Esophagus squamous epithelium (tissue), 5 donors: ENCODE measurements at regions of chr7 and their contacts with region 1.

Region 1: GRCh38 chr7:945556-946255 is 8.8 kb downstream of the ADAP1 start:
- DNase-seq: no peak
- H3K4me3 ChIP-seq: peak overlapping the region; percentile 2 to 49 (median 30)
- H3K27ac ChIP-seq: peak overlapping the region; percentile 77 to 89 (median 84)
- H3K4me1 ChIP-seq: peaks cover 14 to 30% (median 14%) of the 10 kb centered on the region in 3 donors
- H3K27me3 ChIP-seq: no peaks in the 10 kb centered on the region
- CTCF ChIP-seq: no peak
- POLR2A ChIP-seq: peak in 3 of 4 donors; percentile 39 to 47 (median 47)

Region 2: DNA sequence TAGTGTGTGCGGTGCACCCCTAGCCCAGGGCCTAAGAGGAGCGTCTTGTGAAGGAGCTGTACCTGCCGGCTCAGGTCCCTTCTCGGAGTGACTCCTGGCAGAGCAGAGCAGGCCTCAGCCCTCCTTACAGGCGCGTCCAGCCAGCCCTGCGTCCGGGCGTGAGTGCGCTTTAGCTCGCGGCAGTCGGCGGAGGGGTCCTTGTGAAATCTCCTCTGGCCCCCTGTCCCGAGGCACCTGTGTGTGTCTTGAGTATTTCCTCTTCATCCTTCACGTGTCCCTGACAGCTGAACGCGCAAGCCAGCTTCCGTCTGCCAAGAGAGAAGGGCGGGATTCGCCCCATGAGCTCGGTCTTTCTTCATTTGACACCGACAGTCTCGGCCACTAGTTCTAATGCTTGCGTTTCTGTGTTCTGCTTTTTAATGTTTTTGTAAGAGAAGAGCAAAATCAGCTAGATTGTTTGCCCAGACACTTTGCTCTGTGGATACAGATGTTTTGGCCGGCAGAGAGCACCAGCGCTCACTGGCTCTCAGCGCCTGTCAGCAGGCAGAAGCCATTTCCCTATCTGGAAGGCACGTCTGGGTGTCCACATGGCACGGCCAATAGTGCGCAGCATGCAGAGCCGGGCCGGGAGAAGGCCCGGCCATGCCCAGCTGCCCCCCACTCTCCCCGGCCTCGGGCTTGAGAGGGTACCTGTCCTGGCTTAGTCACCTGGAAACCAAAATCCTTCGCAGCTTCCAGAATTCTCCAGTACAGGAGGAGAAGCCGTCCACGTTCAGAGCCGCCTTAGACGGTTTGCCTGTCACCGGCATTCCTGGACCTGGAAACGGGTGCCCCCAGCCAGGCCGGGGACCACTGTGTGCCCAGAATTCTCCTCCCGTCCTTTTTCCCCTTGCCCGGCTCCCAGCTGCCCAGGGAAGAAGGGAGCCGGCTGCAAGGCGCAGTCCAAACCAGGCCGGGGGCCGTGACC is 62.4 kb before region 1 on chr7:
- intact Hi-C with region 1: no loop called
- DNase-seq: no peak
- H3K4me3 ChIP-seq: no peak overlapping the region
- H3K27ac ChIP-seq: peak overlapping the region in 2 of 4 donors; percentile 9 to 19
- H3K4me1 ChIP-seq: peaks cover 28 to 82% (median 48%) of the 10 kb centered on the region in 3 donors
- H3K27me3 ChIP-seq: no peaks in the 10 kb centered on the region
- CTCF ChIP-seq: no peak
- POLR2A ChIP-seq: no peak

Region 3: DNA sequence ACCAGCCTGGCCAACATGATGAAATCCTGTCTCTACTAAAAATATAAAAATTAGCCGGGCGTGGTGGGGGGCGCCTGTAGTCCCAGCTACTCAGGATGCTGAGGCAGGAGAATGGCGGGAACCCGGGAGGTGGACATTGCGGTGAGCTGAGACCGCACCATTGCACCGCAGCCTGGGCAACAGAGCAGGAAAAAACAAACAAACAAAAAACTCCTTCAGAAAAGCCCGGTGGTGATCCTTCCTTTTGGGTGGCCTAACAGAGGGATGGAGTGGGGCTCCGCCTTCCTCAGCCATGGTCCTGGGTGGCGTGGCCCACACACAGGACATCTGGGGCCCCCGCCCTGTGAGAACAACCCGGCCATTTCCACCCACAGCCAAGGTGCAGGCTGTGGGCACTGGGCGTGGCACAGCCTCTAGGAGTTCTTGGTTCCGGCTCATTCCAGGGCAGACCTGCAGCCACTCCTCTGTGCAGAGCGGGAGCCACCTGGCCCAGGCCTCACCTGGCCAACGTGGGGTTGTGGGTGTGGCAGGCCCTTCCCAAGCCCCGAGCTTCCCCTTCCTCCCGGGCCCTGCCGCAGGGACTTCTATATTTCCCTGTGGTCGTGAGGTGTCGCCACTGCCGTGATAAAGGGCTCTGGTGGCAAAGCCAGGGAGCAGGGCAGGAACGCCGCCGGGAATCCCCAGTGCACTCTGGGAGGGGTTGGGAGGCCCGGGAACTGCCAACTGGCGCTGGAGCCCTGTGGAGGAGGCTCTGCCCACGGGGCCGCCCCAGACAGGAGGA is 31.8 kb before region 1 on chr7:
- intact Hi-C with region 1: loop called (anchors 2 kb)
- DNase-seq: no peak
- H3K4me3 ChIP-seq: peak overlapping the region in 1 of 4 donors; percentile 8
- H3K27ac ChIP-seq: peak overlapping the region in 1 of 4 donors; percentile 17
- H3K4me1 ChIP-seq: peaks cover 16 to 40% (median 16%) of the 10 kb centered on the region in 3 donors
- H3K27me3 ChIP-seq: peaks cover 0 to 5% (median 0%) of the 10 kb centered on the region in 4 donors
- CTCF ChIP-seq: peak in 1 of 6 experiments; percentile 21
- POLR2A ChIP-seq: no peak

Region 4: GRCh38 chr7:1024331-1024841 is 78.7 kb after region 1 on chr7:
- intact Hi-C with region 1: no loop called
- DNase-seq: no peak
- H3K4me3 ChIP-seq: no peak overlapping the region
- H3K27ac ChIP-seq: no peak overlapping the region
- H3K4me1 ChIP-seq: peaks cover 13 to 32% (median 16%) of the 10 kb centered on the region in 3 donors
- H3K27me3 ChIP-seq: no peaks in the 10 kb centered on the region
- CTCF ChIP-seq: no peak
- POLR2A ChIP-seq: no peak